Right lobe of liver (tissue), 6 donors: ENCODE measurements at regions of chr1 and their contacts with region 1.

Region 1: DNA sequence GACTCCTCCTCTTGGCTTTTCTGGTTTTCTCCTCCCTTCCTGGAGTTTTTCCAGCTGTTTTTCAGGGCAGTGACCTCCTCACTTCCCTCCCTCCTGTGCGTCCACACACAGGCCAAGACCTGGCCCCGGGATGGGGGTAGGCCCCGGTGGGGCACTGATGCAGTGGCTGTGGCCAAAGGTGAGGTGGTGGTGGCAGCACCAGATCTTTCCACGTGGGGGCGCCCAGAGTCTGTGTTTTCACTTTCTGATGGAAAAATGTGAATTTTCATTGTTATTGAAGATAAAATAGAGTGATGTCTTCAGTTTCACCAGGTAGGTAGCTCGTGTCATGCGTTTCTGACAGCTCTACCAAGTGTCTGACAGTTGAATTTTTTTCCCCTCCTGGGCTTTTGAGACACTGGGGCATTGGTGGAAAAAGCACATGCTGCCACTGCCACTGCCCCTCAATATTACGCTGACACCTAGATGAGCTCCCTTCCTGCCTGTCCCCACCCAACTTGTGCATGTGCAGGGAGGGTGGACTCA is 39.9 kb upstream of the MAGOH start:
- DNase-seq: peak; percentile 67 to 78 (median 71)
- ATAC-seq: peak; percentile 77 to 87 (median 84)
- H3K4me3 ChIP-seq: no peak overlapping the region
- H3K27ac ChIP-seq: no peak overlapping the region
- H3K4me1 ChIP-seq: no peaks in the 10 kb centered on the region
- H3K27me3 ChIP-seq: no peaks in the 10 kb centered on the region
- CTCF ChIP-seq: peak; percentile 81 to 91 (median 82)
- POLR2A ChIP-seq: no peak

Region 2: DNA sequence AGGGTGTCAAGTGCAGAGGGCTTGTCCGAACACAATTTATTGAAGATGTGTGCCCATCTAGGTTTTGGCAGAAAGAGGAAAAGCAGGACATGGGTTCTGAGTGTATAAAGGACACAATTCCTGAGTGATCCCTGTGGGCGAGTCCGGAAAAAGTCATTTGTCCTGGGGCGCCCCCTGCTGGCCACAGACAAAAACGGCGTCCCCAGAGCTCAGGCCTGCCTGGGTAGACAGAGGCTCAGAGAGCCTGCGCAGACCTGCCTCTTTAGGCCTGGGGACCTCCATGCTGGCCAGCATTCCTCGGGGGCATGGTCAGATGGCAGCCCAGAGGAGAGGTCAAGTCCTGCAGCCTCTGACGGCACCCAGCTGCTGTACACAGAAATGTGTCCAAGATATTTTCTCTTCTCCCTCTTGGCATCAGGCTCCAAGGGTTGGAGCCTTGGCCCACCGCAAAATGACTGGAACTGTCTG is 115.1 kb after region 1 on chr1:
- intact Hi-C with region 1: loop called (anchors 2 to 5 kb)
- DNase-seq: peak; percentile 74 to 82 (median 79)
- ATAC-seq: peak; percentile 87 to 95 (median 91)
- H3K4me3 ChIP-seq: no peak overlapping the region
- H3K27ac ChIP-seq: no peak overlapping the region
- H3K4me1 ChIP-seq: no peaks in the 10 kb centered on the region
- H3K27me3 ChIP-seq: no peaks in the 10 kb centered on the region
- CTCF ChIP-seq: peak; percentile 84 to 97 (median 90)
- POLR2A ChIP-seq: no peak